MCF 10A (cell line): ENCODE measurements at regions of chr9 and their contacts with region 1.

Region 1: DNA sequence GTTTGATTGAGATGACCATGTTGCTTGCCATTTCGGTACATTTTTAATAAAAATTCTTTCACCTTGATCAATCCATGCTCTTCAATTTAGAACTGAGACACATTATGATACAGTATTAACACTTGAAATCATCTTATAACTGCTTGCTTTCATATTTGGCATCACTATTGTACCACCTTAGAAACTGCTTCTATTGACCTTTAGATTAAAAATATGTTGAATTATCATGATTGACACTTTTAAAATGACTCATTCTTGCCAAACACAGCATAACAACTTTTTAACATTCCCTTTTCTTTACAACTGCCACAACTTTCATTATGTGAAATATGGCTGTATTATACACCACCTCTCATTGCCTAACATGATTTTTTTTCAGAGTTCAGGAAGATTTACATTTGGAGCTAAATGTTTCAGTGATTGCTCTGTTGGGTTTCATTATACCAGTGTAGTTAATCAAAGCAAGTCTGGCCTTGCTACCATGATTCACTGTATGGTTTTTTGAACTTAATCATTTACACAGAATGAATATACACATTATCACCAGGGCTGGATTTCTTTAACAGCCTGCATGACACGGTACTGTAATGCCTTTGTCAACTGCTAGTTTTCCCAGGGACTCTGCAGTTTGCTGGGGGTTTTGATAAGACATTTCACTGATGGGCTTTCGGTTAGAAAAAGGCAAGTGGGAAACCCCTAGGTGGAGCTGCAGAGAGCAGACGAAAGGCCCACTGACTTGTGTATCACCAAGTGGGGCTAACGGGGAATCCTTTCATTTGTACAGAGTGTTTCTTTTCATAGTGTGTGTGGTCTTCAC is 93.6 kb upstream of the TLE4 start:
- DNase-seq: peak; percentile 24
- H3K4me3 Mint-ChIP-seq: no peak overlapping the region
- H3K27ac Mint-ChIP-seq: no peak overlapping the region
- H3K4me1 Mint-ChIP-seq: peaks cover 8% of the 10 kb centered on the region
- H3K27me3 Mint-ChIP-seq: no peaks in the 10 kb centered on the region
- CTCF ChIP-seq: no peak

Region 2: DNA sequence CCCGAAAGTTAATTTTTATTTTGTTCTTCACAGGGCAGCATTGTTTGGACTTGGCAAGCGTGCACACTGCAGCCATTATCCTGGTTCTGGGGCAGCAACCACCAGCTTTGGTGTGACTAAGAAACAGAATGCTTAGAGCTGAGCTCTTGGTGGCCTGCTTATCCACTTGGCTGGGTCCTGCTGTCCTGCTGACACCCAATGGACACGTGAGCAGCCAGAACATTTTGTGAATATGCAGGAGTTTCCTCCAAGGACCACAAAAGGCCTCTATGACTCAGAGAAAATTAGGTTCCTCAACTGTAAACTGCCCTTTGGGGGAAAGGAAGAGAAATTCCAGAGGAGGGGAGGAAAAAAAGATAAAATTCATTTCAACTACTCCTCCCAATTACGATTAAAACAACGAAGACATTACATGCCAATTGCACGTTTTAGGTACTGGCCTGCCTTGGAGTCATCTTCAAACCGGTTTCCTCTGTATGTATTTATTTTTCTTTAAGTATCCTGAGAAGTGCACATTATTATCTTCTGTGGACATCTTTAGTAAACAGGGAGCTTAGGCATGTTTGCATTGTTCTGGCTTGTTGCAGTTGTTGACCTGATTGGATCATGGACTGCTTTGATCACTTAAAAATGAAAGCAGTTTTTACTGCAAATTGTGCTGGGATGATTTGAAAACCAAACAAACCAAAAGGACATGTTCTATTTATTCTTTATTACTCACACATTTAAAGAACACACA is 11.3 kb after region 1 on chr9:
- CTCF ChIA-PET with region 1: interaction called, 4 read pairs
- POLR2A ChIA-PET with region 1: interaction called, 15 read pairs
- intact Hi-C with region 1: no loop called
- DNase-seq: peak; percentile 51
- H3K4me3 Mint-ChIP-seq: peak overlapping the region; percentile 39
- H3K27ac Mint-ChIP-seq: peak overlapping the region; percentile 47
- H3K4me1 Mint-ChIP-seq: peaks cover 21% of the 10 kb centered on the region
- H3K27me3 Mint-ChIP-seq: no peaks in the 10 kb centered on the region
- CTCF ChIP-seq: no peak